ENCODE measurements at regions of chr19 and their contacts with region 1.

Region 1: GRCh38 chr19:47284324-47284899 is 9.7 kb downstream of the INAFM1 start:
- DNase-seq: no peak
- ATAC-seq: peak; percentile 27
- H3K4me3 Mint-ChIP-seq: no peak overlapping the region
- H3K27ac Mint-ChIP-seq: no peak overlapping the region
- H3K4me1 Mint-ChIP-seq: peaks cover 2% of the 10 kb centered on the region
- H3K27me3 Mint-ChIP-seq: no peaks in the 10 kb centered on the region

Region 2: GRCh38 chr19:47296036-47296435 is 11.6 kb after region 1 on chr19:
- CTCF ChIA-PET with region 1: interaction called, 18 read pairs
- DNase-seq: peak; percentile 86
- ATAC-seq: peak; percentile 96
- H3K4me3 Mint-ChIP-seq: no peak overlapping the region
- H3K27ac Mint-ChIP-seq: no peak overlapping the region
- H3K4me1 Mint-ChIP-seq: peaks cover 14% of the 10 kb centered on the region
- H3K27me3 Mint-ChIP-seq: no peaks in the 10 kb centered on the region

Region 3: DNA sequence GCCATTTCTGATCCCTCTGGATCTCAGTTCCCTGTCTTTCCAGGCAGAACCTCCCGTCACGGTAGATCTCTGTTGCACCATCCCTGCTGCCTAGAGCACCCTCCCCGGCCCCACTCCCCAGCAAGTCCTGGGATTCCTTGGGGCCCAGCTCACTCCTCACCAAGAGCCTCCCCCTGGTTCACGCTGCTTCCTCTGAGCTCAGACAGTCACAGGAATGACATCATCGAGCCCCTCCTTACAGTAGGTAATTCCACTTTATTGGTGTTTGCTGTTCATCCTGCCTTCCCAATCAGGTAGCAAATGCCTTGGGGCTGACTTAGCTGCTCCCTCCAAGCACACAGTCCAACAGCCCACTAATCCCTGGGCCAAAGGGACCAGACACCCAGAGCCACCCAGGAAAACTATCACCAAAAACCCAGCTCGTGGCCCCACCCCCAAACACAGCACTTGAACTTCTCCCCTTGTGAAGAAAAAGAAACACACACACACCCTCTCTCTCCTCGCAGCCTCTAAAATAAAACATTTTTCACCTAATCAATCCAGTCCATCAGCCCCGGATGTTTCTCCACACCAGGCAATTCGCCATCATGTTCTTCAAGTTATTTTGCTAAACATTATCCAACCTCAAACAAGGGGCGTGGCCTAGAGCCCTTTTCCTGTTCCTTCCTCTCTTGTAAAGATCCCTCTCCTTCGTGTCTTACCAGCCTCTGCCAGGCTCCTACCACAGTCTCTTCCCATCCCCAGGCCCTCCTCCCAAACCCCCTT is 228.0 kb after region 1 on chr19:
- CTCF ChIA-PET with region 1: no interaction called
- DNase-seq: no peak
- ATAC-seq: no peak
- H3K4me3 Mint-ChIP-seq: peak overlapping the region; percentile 100
- H3K27ac Mint-ChIP-seq: peak overlapping the region; percentile 99
- H3K4me1 Mint-ChIP-seq: peaks cover 63% of the 10 kb centered on the region
- H3K27me3 Mint-ChIP-seq: no peaks in the 10 kb centered on the region

Measured in activated CD8-positive, alpha-beta memory T cell treated with anti-CD3 and anti-CD28 coated beads, Interleukin-2, amount 10 ng/mL, durations not matched to agents 7 days and 5 days (primary cell).